ENCODE measurements at regions of chrX and their contacts with region 1.

Region 1: DNA sequence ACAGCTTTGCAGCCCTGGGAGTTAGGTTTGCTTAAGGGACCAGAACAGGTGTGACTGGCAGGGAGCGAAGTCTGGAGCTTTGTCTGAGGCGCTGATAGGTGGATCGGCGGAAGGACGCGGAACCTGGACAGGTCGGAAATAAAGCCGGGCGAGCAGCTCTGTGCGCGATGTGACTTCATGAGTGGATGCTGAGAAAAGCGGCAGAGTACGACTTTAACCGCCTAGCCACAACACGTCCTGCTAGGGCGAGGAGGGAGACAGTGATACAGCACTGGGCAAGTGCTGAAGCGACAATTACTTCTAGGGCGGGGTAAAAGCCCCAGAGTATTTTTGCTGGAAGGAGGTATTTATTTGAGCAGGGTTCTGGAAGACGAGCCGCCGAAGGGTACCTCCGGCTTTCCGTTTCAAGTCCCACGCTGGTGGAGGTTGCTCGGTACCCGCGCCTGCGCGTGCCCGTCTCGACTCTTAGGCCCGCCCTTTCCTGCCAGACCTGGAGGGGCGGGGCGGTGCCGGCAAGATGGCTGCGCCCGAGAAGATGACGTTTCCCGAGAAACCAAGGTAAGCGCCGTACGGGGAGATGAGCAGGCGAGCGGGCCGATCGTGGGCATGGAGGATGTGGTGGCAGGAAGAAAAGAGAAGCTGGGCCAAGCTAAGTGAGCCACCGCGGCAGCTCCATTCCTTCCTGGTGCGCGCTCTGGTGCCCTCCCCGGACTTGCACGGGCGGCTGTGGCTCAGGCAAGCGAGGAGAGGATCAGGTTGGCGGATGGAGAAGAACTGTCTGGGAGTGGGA is at the start of gene ZRSR2:
- DNase-seq: peak; percentile 80
- H3K4me3 ChIP-seq: peak within 1 kb of the TSS; percentile 47 to 68 (median 53)
- H3K27ac ChIP-seq: peak within 1 kb of the TSS; percentile 29
- H3K4me1 ChIP-seq: peaks cover 5% of the 10 kb centered on the region
- H3K27me3 ChIP-seq: no peaks in the 10 kb centered on the region
- CTCF ChIP-seq: no peak
- POLR2A ChIP-seq: peak; percentile 78
- total RNA-seq, gene ZRSR2: 8.1 and 9.4 TPM in 2 replicates

Region 2: DNA sequence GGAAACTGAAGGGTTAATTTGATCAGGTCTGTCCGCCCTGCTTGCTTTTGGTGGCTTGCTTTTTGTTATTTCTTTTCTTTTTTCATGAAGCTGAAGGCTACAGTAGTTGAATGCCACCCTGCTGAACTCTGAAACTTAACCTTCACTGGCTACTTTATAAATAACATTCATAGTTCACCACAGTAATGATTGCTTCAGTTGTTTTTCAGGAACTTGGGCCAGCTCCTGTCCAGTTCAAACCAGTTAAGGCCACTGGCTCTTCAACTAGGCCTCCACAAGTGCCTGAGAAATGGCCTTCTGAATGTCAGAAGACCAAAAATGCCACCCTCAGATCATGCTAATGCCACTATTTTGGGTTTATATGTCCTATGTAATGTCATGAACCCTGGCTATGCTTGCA is 512.6 kb before region 1 on chrX:
- CTCF ChIA-PET with region 1: no interaction called
- POLR2A ChIA-PET with region 1: no interaction called
- dilution Hi-C with region 1: no loop called
- intact Hi-C with region 1: no loop called
- DNase-seq: no peak
- H3K4me3 ChIP-seq: no peak overlapping the region
- H3K27ac ChIP-seq: no peak overlapping the region
- H3K4me1 ChIP-seq: no peaks in the 10 kb centered on the region
- H3K27me3 ChIP-seq: no peaks in the 10 kb centered on the region
- CTCF ChIP-seq: no peak
- POLR2A ChIP-seq: no peak

Region 3: DNA sequence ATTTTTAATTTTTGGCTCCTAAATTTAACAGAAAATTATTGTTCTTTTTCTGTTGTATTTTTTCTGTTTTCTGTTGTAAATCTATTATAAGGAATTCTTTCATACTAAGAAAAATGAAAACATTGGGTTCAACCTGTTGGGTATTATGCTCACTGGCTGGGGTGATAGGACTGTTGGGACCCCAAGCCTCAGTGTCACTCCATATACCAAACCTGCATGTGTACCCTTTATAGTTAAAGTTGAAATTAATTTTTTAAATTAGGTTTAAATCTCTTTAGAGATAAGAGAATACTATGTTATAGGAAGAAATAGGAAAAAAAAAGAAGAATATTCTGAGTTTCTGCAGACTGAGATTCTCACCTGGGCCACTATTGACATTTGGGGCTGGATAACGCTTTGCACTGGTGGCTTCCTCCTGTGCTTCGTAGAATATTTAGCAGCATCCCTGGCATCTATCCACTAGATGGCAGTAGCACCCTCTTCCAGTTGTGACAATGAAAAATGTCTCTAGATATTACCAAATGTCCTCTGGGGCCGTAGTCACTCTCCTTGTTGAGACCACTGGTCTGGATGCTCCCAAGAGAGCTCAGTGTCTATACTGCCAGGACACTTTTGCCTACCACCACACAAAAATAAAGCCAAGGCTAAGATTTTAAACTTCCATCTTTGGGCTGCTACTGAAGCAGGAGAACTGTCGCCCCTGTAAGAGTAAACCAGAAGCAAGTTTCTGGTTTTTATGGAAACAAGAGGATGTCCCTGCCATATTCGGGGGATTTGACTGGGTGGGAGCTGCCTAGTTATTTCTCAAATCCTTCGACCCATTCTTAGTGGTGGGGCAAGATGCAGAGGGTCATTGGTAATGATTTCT is 103.1 kb before region 1 on chrX:
- CTCF ChIA-PET with region 1: no interaction called
- POLR2A ChIA-PET with region 1: no interaction called
- dilution Hi-C with region 1: no loop called
- intact Hi-C with region 1: loop called (anchors 10 kb)
- DNase-seq: peak; percentile 56
- H3K4me3 ChIP-seq: no peak overlapping the region
- H3K27ac ChIP-seq: no peak overlapping the region
- H3K4me1 ChIP-seq: no peaks in the 10 kb centered on the region
- H3K27me3 ChIP-seq: no peaks in the 10 kb centered on the region
- CTCF ChIP-seq: peak; percentile 47 to 55
- POLR2A ChIP-seq: no peak

Region 4: DNA sequence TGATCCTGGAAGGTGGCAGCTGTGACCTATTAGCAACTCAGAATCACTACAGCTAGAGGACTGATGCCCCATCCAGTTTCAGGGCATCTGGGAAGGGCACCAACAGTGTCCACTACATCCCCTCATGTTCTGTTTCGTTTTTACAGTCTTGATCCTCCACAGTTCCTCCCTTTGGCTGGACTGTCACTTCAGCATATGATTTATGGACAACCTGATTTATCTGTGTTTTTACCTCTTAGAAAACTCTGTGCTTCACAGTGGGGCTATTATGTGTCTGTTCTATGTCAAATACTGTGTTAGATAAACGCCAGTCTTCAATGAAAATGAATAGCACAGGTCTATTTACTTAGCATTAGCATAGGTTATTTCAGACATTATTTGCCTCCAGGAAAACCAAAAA is 270.1 kb after region 1 on chrX:
- CTCF ChIA-PET with region 1: no interaction called
- POLR2A ChIA-PET with region 1: no interaction called
- dilution Hi-C with region 1: no loop called
- intact Hi-C with region 1: no loop called
- DNase-seq: no peak
- H3K4me3 ChIP-seq: no peak overlapping the region
- H3K27ac ChIP-seq: no peak overlapping the region
- H3K4me1 ChIP-seq: no peaks in the 10 kb centered on the region
- H3K27me3 ChIP-seq: no peaks in the 10 kb centered on the region
- CTCF ChIP-seq: no peak
- POLR2A ChIP-seq: no peak

Region 5: GRCh38 chrX:16320765-16321355 is 530.7 kb after region 1 on chrX:
- CTCF ChIA-PET with region 1: no interaction called
- POLR2A ChIA-PET with region 1: no interaction called
- dilution Hi-C with region 1: no loop called
- intact Hi-C with region 1: no loop called
- DNase-seq: no peak
- H3K4me3 ChIP-seq: no peak overlapping the region
- H3K27ac ChIP-seq: no peak overlapping the region
- H3K4me1 ChIP-seq: no peaks in the 10 kb centered on the region
- H3K27me3 ChIP-seq: no peaks in the 10 kb centered on the region
- CTCF ChIP-seq: no peak
- POLR2A ChIP-seq: no peak